ENCODE measurements at regions of chr17 and their contacts with region 1.

Region 1: GRCh38 chr17:44331249-44331760 is 6.7 kb upstream of the SLC25A39 start:
- DNase-seq: no peak
- H3K4me3 ChIP-seq: no peak overlapping the region
- H3K27ac ChIP-seq: no peak overlapping the region
- H3K27me3 ChIP-seq: peaks cover 10% of the 10 kb centered on the region
- CTCF ChIP-seq: peak; percentile 74

Region 2: GRCh38 chr17:44186307-44187130 is 144.8 kb before region 1 on chr17 and contains the start of gene TMUB2:
- CTCF ChIA-PET with region 1: interaction called, 13 read pairs
- POLR2A ChIA-PET with region 1: interaction called, 4 read pairs
- DNase-seq: peak; percentile 99
- H3K4me3 ChIP-seq: peak within 1 kb of the TSS; percentile 97
- H3K27ac ChIP-seq: peak within 1 kb of the TSS; percentile 97
- H3K27me3 ChIP-seq: no peaks in the 10 kb centered on the region
- CTCF ChIP-seq: no peak
- polyA plus RNA-seq, gene TMUB2: 34.3 and 37.1 TPM in 2 replicates

Region 3: GRCh38 chr17:44218344-44219107 is 112.8 kb before region 1 on chr17:
- CTCF ChIA-PET with region 1: interaction called, 16 read pairs
- POLR2A ChIA-PET with region 1: interaction called, 4 read pairs
- DNase-seq: peak; percentile 75
- H3K4me3 ChIP-seq: peak overlapping the region; percentile 83
- H3K27ac ChIP-seq: peak overlapping the region; percentile 47
- H3K27me3 ChIP-seq: no peaks in the 10 kb centered on the region
- CTCF ChIP-seq: peak; percentile 52

Region 4: DNA sequence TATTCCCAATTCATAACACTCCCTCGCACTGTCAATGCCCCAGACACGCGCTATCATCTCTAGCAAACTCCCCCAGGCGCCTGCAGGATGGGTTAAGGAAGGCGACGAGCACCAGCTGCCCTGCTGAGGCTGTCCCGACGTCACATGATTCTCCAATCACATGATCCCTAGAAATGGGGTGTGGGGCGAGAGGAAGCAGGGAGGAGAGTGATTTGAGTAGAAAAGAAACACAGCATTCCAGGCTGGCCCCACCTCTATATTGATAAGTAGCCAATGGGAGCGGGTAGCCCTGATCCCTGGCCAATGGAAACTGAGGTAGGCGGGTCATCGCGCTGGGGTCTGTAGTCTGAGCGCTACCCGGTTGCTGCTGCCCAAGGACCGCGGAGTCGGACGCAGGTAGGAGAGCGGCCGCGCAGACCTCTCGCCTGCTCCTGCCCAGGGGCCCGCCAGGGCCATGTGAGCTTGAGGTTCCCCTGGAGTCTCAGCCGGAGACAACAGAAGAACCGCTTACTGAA is 13.7 kb after region 1 on chr17 and contains the start of gene GRN:
- CTCF ChIA-PET with region 1: interaction called, 16 read pairs
- POLR2A ChIA-PET with region 1: interaction called, 3 read pairs
- DNase-seq: peak; percentile 98
- H3K4me3 ChIP-seq: peak within 1 kb of the TSS; percentile 98
- H3K27ac ChIP-seq: peak within 1 kb of the TSS; percentile 11
- H3K27me3 ChIP-seq: peaks cover 4% of the 10 kb centered on the region
- CTCF ChIP-seq: no peak
- polyA plus RNA-seq, gene GRN: 203 and 322 TPM in 2 replicates

Region 5: DNA sequence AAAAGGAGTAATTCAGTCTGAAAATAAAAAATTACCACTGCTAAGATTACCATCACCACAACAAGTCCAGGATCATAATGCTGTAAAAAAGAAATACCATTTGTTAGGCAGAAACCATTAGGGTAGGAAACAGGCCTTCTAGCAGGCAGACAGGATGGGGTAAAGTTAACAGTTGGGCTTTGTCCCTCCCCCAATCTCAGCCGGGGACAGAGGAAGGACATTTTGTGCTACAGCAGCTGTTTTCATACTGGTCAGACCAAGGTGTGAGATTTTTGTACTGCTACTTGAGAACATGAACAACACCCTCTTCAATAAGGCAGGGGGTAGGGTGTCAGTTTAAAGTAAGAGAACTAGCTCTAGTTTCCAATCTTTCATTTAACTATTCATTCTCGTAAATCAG is 107.3 kb after region 1 on chr17:
- CTCF ChIA-PET with region 1: no interaction called
- POLR2A ChIA-PET with region 1: no interaction called
- DNase-seq: no peak
- H3K4me3 ChIP-seq: no peak overlapping the region
- H3K27ac ChIP-seq: no peak overlapping the region
- H3K27me3 ChIP-seq: no peaks in the 10 kb centered on the region
- CTCF ChIP-seq: no peak

Region 6: GRCh38 chr17:44451832-44452231 is 120.5 kb after region 1 on chr17:
- CTCF ChIA-PET with region 1: no interaction called
- POLR2A ChIA-PET with region 1: no interaction called
- DNase-seq: no peak
- H3K4me3 ChIP-seq: no peak overlapping the region
- H3K27ac ChIP-seq: no peak overlapping the region
- H3K27me3 ChIP-seq: no peaks in the 10 kb centered on the region
- CTCF ChIP-seq: no peak

Measured in AG04450 (cell line).